CD8-positive, alpha-beta T cell (primary cell): ENCODE measurements at regions of chr16 and their contacts with region 1.

Region 1: DNA sequence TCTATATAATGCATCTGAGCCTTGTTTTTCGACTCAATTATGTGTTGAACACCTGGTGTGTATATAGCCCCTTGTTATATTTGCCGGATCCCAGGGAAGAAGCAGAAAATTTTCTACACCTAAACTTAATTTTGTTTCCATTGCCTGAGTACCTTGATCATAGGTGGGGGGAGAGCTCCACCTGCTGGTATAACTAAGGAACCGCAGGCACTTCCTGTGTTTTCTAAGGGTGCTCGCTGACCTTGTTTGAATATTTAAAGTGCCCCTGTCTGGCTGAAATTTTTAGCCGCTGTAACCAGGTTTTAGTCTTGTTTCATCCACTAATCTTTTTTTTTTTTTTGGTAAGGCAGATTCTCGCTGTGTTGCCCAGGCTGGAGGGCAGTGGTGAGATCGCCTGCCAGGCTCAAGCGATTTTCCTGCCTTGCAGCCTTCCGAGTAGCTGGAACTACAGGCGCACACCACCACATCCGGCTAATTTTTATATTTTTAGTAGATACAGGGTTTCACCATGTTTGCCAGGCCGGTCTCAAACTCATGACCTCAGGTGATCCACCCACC is 6.5 kb upstream of the NUBP1 start:
- DNase-seq: peak; percentile 48 to 86 (median 69)
- ATAC-seq: peak; percentile 97
- H3K4me3 ChIP-seq: peak overlapping the region in 1 of 2 experiments; percentile 23
- H3K4me3 Mint-ChIP-seq: peak overlapping the region; percentile 46
- H3K27ac ChIP-seq: peak overlapping the region in 1 of 2 experiments; percentile 44
- H3K27ac Mint-ChIP-seq: peak overlapping the region; percentile 71
- H3K4me1 ChIP-seq: peaks cover 8% of the 10 kb centered on the region
- H3K4me1 Mint-ChIP-seq: peaks cover 16% of the 10 kb centered on the region
- H3K27me3 ChIP-seq: no peaks in the 10 kb centered on the region
- H3K27me3 Mint-ChIP-seq: no peaks in the 10 kb centered on the region
- CTCF ChIP-seq: peak; percentile 91

Region 2: GRCh38 chr16:9139965-9140364 is 1597.2 kb before region 1 on chr16:
- CTCF ChIA-PET with region 1: no interaction called
- POLR2A ChIA-PET with region 1: no interaction called
- intact Hi-C with region 1: loop called in 1 of 2 experiments (anchors 10 kb)
- DNase-seq: peak in 2 of 9 experiments; percentile 35 to 52
- ATAC-seq: peak; percentile 35
- H3K4me3 ChIP-seq: no peak overlapping the region
- H3K4me3 Mint-ChIP-seq: no peak overlapping the region
- H3K27ac ChIP-seq: no peak overlapping the region
- H3K27ac Mint-ChIP-seq: no peak overlapping the region
- H3K4me1 ChIP-seq: peaks cover 13% of the 10 kb centered on the region
- H3K4me1 Mint-ChIP-seq: peaks cover 17% of the 10 kb centered on the region
- H3K27me3 ChIP-seq: no peaks in the 10 kb centered on the region
- H3K27me3 Mint-ChIP-seq: no peaks in the 10 kb centered on the region
- CTCF ChIP-seq: no peak

Region 3: GRCh38 chr16:10256784-10257641 is 480.1 kb before region 1 on chr16:
- CTCF ChIA-PET with region 1: interaction called, 9 read pairs
- POLR2A ChIA-PET with region 1: no interaction called
- intact Hi-C with region 1: loop called (anchors 1 kb)
- DNase-seq: peak; percentile 9 to 69 (median 44)
- ATAC-seq: peak; percentile 69
- H3K4me3 ChIP-seq: no peak overlapping the region
- H3K4me3 Mint-ChIP-seq: no peak overlapping the region
- H3K27ac ChIP-seq: no peak overlapping the region
- H3K27ac Mint-ChIP-seq: no peak overlapping the region
- H3K4me1 ChIP-seq: peaks cover 4% of the 10 kb centered on the region
- H3K4me1 Mint-ChIP-seq: peaks cover 7% of the 10 kb centered on the region
- H3K27me3 ChIP-seq: no peaks in the 10 kb centered on the region
- H3K27me3 Mint-ChIP-seq: no peaks in the 10 kb centered on the region
- CTCF ChIP-seq: peak; percentile 81

Region 4: GRCh38 chr16:10314811-10315210 is 422.3 kb before region 1 on chr16:
- CTCF ChIA-PET with region 1: interaction called, 5 read pairs
- POLR2A ChIA-PET with region 1: interaction called, 6 read pairs
- intact Hi-C with region 1: loop called (anchors 1 to 2 kb)
- DNase-seq: peak in 2 of 9 experiments; percentile 47 to 61
- ATAC-seq: peak; percentile 46
- H3K4me3 ChIP-seq: no peak overlapping the region
- H3K4me3 Mint-ChIP-seq: no peak overlapping the region
- H3K27ac ChIP-seq: no peak overlapping the region
- H3K27ac Mint-ChIP-seq: no peak overlapping the region
- H3K4me1 ChIP-seq: peaks cover 5% of the 10 kb centered on the region
- H3K4me1 Mint-ChIP-seq: peaks cover 22% of the 10 kb centered on the region
- H3K27me3 ChIP-seq: no peaks in the 10 kb centered on the region
- H3K27me3 Mint-ChIP-seq: no peaks in the 10 kb centered on the region
- CTCF ChIP-seq: peak; percentile 68

Region 5: DNA sequence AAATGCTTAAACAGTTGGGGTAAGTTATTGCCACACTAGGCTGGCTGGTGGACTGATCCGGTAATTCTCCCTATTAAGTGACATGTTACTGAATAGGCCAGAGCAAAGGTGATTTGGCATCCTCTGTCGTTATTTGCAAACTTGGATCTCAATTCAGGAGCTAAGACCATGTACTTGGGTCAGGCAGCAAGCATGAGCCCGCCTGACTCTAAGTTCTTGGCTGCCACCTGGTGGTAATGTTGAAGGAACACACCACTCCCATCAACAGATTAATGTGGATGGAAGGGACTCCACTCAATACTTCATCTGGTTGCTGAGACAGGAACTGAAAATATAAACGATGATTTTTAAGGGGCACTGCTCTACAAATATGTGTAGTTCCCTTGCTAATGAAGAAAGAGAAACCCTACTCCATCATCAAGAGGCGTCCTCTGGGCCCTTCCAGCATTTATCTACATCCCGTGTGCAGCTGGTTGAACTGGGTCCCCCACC is 227.6 kb before region 1 on chr16:
- CTCF ChIA-PET with region 1: interaction called, 108 read pairs
- POLR2A ChIA-PET with region 1: interaction called, 3 read pairs
- intact Hi-C with region 1: loop called (anchors 1 kb)
- DNase-seq: peak; percentile 28 to 85 (median 67)
- ATAC-seq: peak; percentile 87
- H3K4me3 ChIP-seq: no peak overlapping the region
- H3K4me3 Mint-ChIP-seq: no peak overlapping the region
- H3K27ac ChIP-seq: no peak overlapping the region
- H3K27ac Mint-ChIP-seq: no peak overlapping the region
- H3K4me1 ChIP-seq: no peaks in the 10 kb centered on the region
- H3K4me1 Mint-ChIP-seq: peaks cover 2% of the 10 kb centered on the region
- H3K27me3 ChIP-seq: no peaks in the 10 kb centered on the region
- H3K27me3 Mint-ChIP-seq: no peaks in the 10 kb centered on the region
- CTCF ChIP-seq: peak; percentile 75

Region 6: GRCh38 chr16:10521681-10522274 is 215.4 kb before region 1 on chr16:
- CTCF ChIA-PET with region 1: interaction called, 108 read pairs
- POLR2A ChIA-PET with region 1: no interaction called
- intact Hi-C with region 1: no loop called
- DNase-seq: peak in 7 of 9 experiments; percentile 7 to 68 (median 44)
- ATAC-seq: peak; percentile 46
- H3K4me3 ChIP-seq: no peak overlapping the region
- H3K4me3 Mint-ChIP-seq: no peak overlapping the region
- H3K27ac ChIP-seq: no peak overlapping the region
- H3K27ac Mint-ChIP-seq: no peak overlapping the region
- H3K4me1 ChIP-seq: no peaks in the 10 kb centered on the region
- H3K4me1 Mint-ChIP-seq: peaks cover 2% of the 10 kb centered on the region
- H3K27me3 ChIP-seq: peaks cover 0 to 3% of the 10 kb centered on the region in 2 experiments
- H3K27me3 Mint-ChIP-seq: peaks cover 11% of the 10 kb centered on the region
- CTCF ChIP-seq: peak; percentile 63

Region 7: DNA sequence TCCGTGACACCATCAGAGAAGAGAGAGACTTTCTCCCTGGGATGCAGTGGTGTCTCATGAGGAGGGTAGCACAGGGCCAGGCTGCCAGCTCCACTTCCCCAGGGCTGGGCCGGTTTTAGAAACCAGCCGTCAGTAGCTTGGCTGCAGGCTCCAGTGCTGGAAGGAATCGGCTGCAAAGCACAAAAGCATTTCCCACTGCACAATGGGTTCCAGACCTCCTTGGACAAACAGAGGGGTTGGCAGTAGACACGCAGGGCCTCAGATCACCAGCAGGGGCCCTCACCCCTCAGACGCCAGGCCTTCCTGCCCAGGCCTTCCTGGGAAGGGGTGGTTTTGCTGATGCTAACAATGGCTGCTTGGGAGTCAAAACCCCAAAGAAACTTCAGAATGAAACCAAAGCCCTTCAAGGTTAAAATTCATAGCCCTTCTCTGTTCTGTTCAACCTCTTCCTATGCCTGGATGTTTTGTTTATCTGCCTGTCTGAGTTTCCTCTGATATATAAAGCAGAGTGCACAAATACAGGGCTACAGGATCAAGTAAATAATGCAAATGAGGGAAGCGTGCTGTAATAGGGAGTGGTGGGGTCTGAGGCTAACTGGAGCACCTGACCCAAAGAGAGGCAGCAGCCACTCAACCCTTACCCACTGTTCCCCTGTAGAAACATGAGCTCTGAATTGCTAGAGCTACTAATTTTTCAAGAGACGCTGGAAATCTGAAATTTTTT is 68.7 kb before region 1 on chr16:
- CTCF ChIA-PET with region 1: interaction called, 3 read pairs
- POLR2A ChIA-PET with region 1: no interaction called
- intact Hi-C with region 1: loop called in 1 of 2 experiments (anchors 1 kb)
- DNase-seq: peak in 2 of 9 experiments; percentile 12 to 23
- ATAC-seq: no peak
- H3K4me3 ChIP-seq: no peak overlapping the region
- H3K4me3 Mint-ChIP-seq: no peak overlapping the region
- H3K27ac ChIP-seq: no peak overlapping the region
- H3K27ac Mint-ChIP-seq: no peak overlapping the region
- H3K4me1 ChIP-seq: no peaks in the 10 kb centered on the region
- H3K4me1 Mint-ChIP-seq: no peaks in the 10 kb centered on the region
- H3K27me3 ChIP-seq: no peaks in the 10 kb centered on the region
- H3K27me3 Mint-ChIP-seq: peaks cover 2% of the 10 kb centered on the region
- CTCF ChIP-seq: no peak

Region 8: DNA sequence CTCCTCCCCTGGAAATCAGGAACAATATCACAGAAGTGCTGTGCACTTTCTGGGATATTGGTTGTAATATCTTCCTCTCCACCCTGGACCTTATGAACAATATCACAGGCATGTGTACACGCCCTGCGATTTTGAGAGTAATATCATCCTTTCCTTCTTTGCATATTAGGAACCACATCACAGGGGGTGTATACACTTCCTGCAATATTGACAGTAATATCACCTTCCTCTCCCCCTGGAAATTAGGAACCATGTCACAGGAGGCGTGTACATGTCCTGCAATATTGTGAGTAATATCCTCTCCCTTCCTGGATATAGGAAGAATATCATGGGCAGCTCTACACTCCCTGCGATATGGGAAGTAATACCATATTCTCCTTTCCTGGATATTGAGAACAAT is 28.2 kb before region 1 on chr16:
- CTCF ChIA-PET with region 1: no interaction called
- POLR2A ChIA-PET with region 1: no interaction called
- intact Hi-C with region 1: no loop called
- DNase-seq: no peak
- ATAC-seq: no peak
- H3K4me3 ChIP-seq: no peak overlapping the region
- H3K4me3 Mint-ChIP-seq: no peak overlapping the region
- H3K27ac ChIP-seq: no peak overlapping the region
- H3K27ac Mint-ChIP-seq: no peak overlapping the region
- H3K4me1 ChIP-seq: no peaks in the 10 kb centered on the region
- H3K4me1 Mint-ChIP-seq: no peaks in the 10 kb centered on the region
- H3K27me3 ChIP-seq: peaks cover 0 to 3% of the 10 kb centered on the region in 2 experiments
- H3K27me3 Mint-ChIP-seq: peaks cover 15% of the 10 kb centered on the region
- CTCF ChIP-seq: no peak

Region 9: DNA sequence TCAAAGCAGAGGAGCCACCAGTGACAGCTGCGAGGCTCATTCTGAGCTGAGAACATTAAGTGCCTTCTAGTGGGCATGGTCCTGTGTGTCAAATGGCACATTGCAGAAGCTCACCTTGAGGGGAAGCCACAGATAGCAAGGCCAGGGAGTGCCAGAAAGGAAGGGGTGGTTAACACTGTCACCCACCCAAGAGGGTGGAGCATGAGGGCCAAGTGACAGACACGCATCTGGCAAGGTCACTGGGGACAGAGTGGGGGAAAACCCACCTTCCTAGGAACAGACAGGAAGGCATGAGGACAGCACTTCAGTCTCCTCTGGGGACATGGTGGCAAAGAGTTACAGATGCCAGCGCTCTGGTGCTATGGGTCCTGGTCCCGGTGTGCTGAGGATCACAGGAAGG is 28.6 kb after region 1 on chr16:
- CTCF ChIA-PET with region 1: no interaction called
- POLR2A ChIA-PET with region 1: no interaction called
- intact Hi-C with region 1: no loop called
- DNase-seq: peak in 5 of 9 experiments; percentile 20 to 86 (median 61)
- ATAC-seq: peak; percentile 87
- H3K4me3 ChIP-seq: no peak overlapping the region
- H3K4me3 Mint-ChIP-seq: peak overlapping the region; percentile 39
- H3K27ac ChIP-seq: peak overlapping the region in 1 of 2 experiments; percentile 52
- H3K27ac Mint-ChIP-seq: peak overlapping the region; percentile 86
- H3K4me1 ChIP-seq: peaks cover 21% of the 10 kb centered on the region
- H3K4me1 Mint-ChIP-seq: peaks cover 23% of the 10 kb centered on the region
- H3K27me3 ChIP-seq: no peaks in the 10 kb centered on the region
- H3K27me3 Mint-ChIP-seq: no peaks in the 10 kb centered on the region
- CTCF ChIP-seq: no peak